Activated naive CD4-positive, alpha-beta T cell treated with anti-CD3 and anti-CD28 coated beads for 36 hours (primary cell): ENCODE measurements at regions of chr10 and their contacts with region 1.

Region 1: GRCh38 chr10:70758757-70759514 is 26.2 kb downstream of the TBATA start:
- DNase-seq: peak; percentile 84
- H3K4me3 Mint-ChIP-seq: no peak overlapping the region
- H3K27ac Mint-ChIP-seq: no peak overlapping the region
- H3K4me1 Mint-ChIP-seq: peaks cover 7% of the 10 kb centered on the region
- H3K27me3 Mint-ChIP-seq: no peaks in the 10 kb centered on the region

Region 2: DNA sequence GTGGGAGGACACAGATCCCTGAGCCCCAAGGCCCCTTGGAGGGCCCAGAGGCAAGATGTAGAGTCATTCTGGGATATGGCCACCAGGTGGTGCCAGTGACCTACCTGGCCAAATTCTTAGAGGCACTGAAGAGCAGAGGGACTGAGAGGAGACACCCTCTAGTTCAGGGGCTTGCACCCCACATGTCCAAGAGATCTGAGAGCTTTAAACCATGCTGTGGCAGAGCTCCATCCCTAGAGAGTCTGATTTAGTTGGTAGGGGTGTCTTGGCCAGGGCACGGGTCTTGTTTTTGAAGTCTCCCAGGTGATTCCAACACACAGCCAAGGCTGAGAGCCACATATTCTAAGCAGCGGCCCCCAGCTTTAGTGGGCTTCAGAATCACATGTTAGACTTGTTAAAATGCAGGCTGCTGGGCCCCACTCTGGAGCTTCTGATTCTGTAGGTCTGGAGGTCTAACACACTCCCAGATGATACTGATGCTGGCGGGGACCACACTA is 208.9 kb before region 1 on chr10:
- CTCF ChIA-PET with region 1: interaction called, 27 read pairs
- intact Hi-C with region 1: loop called (anchors 1 kb)
- DNase-seq: peak; percentile 82
- H3K4me3 Mint-ChIP-seq: no peak overlapping the region
- H3K27ac Mint-ChIP-seq: no peak overlapping the region
- H3K4me1 Mint-ChIP-seq: no peaks in the 10 kb centered on the region
- H3K27me3 Mint-ChIP-seq: no peaks in the 10 kb centered on the region

Region 3: DNA sequence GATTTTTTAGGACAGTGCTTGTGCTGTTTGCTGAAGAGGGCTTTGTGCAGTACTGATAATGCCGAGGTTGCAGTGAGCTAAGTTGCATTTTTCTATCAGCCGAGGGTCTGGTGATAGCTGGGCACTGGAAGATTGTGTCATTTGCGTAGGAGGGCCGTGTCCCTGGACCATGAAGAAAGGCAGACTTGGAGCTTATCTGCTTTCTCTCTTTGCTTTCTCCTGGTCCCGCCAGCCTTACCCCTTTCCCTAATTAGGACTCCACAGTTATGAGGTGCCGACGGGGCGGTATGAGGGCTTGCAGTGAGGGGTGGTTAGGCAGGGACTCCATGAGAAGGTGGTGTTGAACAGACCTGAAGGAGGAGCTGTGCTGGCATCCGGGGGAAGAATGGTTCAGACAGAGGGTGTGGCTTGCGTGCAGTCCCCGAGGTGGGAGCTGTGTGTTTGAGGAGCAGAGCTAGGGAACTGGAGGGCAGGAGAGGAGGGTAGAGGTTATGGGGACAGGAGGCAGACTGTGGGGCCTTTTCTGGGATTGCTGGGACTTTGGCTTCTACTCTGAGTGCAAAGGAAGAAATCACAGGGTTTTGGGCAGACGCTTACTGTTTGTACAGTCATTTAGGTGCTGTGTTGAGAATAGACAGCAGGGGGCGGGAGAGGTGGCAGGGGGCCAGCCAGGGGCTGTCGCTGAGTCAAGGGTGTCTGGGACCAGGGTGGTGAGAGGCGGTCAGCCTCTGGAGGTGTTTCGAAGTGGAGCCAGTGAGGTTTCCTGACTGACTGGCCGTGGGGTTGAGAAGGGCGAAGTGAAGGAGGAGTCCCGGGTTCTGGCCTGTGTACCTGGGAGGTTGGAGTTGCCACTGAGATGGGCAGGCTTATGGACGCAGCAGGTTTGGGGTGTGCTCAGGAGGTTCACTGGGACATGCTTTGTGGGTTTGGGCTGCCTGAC is 199.8 kb before region 1 on chr10:
- CTCF ChIA-PET with region 1: interaction called, 12 read pairs
- intact Hi-C with region 1: loop called (anchors 1 kb)
- DNase-seq: peak; percentile 81
- H3K4me3 Mint-ChIP-seq: peak overlapping the region; percentile 69
- H3K27ac Mint-ChIP-seq: no peak overlapping the region
- H3K4me1 Mint-ChIP-seq: peaks cover 11% of the 10 kb centered on the region
- H3K27me3 Mint-ChIP-seq: no peaks in the 10 kb centered on the region

Region 4: GRCh38 chr10:70619271-70620019 is 139.5 kb before region 1 on chr10:
- CTCF ChIA-PET with region 1: interaction called, 4 read pairs
- intact Hi-C with region 1: loop called (anchors 2 kb)
- DNase-seq: no peak
- H3K4me3 Mint-ChIP-seq: no peak overlapping the region
- H3K27ac Mint-ChIP-seq: no peak overlapping the region
- H3K4me1 Mint-ChIP-seq: peaks cover 4% of the 10 kb centered on the region
- H3K27me3 Mint-ChIP-seq: peaks cover 3% of the 10 kb centered on the region